ENCODE measurements at regions of chr4 and their contacts with region 1.

Region 1: GRCh38 chr4:145234091-145234706 is 53.8 kb upstream of the OTUD4 start:
- DNase-seq: peak; percentile 66
- ATAC-seq: peak; percentile 99
- H3K4me3 Mint-ChIP-seq: no peak overlapping the region
- H3K27ac Mint-ChIP-seq: no peak overlapping the region
- H3K4me1 Mint-ChIP-seq: no peaks in the 10 kb centered on the region; the same call in 1 of the 2 replicates
- H3K27me3 Mint-ChIP-seq: no peaks in the 10 kb centered on the region
- CTCF ChIP-seq: peak; percentile 39; the same call in 1 of the 2 replicates

Region 2: DNA sequence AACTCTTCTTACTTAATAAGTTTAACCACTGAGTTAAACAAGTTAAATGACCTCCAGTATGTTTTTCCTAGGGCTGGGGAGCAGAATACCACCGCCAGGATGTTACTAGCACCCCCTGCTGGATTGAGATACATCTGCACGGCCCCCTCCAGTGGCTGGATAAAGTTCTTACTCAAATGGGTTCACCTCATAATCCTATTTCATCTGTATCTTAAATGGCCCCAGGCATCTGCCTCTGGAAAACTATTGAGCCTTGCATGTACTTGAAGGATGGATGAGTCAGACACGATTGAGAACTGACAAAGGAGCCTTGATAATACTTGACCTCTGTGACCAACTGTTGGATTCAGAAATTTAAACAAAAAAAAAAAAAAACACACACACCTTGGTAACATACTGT is 323.5 kb after region 1 on chr4:
- CTCF ChIA-PET with region 1: interaction called, 25 read pairs
- POLR2A ChIA-PET with region 1: no interaction called
- DNase-seq: peak; percentile 71
- ATAC-seq: peak; percentile 98
- H3K4me3 Mint-ChIP-seq: no peak overlapping the region
- H3K27ac Mint-ChIP-seq: no peak overlapping the region
- H3K4me1 Mint-ChIP-seq: peaks cover 3% of the 10 kb centered on the region; the same call in 1 of the 2 replicates
- H3K27me3 Mint-ChIP-seq: no peaks in the 10 kb centered on the region
- CTCF ChIP-seq: peak; percentile 89

Region 3: GRCh38 chr4:145609481-145610427 is 375.6 kb after region 1 on chr4:
- CTCF ChIA-PET with region 1: interaction called, 10 read pairs
- POLR2A ChIA-PET with region 1: no interaction called
- DNase-seq: peak; percentile 71
- ATAC-seq: peak; percentile 65
- H3K4me3 Mint-ChIP-seq: no peak overlapping the region
- H3K27ac Mint-ChIP-seq: no peak overlapping the region
- H3K4me1 Mint-ChIP-seq: peaks cover 7% of the 10 kb centered on the region
- H3K27me3 Mint-ChIP-seq: no peaks in the 10 kb centered on the region; the same call in 1 of the 2 replicates
- CTCF ChIP-seq: peak; percentile 38

Measured in WTC11 (cell line).